ENCODE measurements at regions of chr2 and their contacts with region 1.

Region 1: GRCh38 chr2:136135921-136136906 is 18.3 kb upstream of the CXCR4 start:
- DNase-seq: peak; percentile 32 to 98 (median 95)
- ATAC-seq: peak; percentile 76
- H3K4me3 ChIP-seq: peak overlapping the region; percentile 15
- H3K4me3 Mint-ChIP-seq: peak overlapping the region; percentile 52 to 92 (median 81)
- H3K27ac ChIP-seq: peak overlapping the region; percentile 99
- H3K27ac Mint-ChIP-seq: peak overlapping the region; percentile 82 to 100 (median 99)
- H3K4me1 ChIP-seq: peaks cover 86 to 87% of the 10 kb centered on the region in 2 donors
- H3K4me1 Mint-ChIP-seq: peaks cover 70 to 100% (median 94%) of the 10 kb centered on the region in 7 donors
- H3K27me3 ChIP-seq: no peaks in the 10 kb centered on the region
- H3K27me3 Mint-ChIP-seq: peaks cover 0 to 50% (median 0%) of the 10 kb centered on the region in 5 donors

Region 2: DNA sequence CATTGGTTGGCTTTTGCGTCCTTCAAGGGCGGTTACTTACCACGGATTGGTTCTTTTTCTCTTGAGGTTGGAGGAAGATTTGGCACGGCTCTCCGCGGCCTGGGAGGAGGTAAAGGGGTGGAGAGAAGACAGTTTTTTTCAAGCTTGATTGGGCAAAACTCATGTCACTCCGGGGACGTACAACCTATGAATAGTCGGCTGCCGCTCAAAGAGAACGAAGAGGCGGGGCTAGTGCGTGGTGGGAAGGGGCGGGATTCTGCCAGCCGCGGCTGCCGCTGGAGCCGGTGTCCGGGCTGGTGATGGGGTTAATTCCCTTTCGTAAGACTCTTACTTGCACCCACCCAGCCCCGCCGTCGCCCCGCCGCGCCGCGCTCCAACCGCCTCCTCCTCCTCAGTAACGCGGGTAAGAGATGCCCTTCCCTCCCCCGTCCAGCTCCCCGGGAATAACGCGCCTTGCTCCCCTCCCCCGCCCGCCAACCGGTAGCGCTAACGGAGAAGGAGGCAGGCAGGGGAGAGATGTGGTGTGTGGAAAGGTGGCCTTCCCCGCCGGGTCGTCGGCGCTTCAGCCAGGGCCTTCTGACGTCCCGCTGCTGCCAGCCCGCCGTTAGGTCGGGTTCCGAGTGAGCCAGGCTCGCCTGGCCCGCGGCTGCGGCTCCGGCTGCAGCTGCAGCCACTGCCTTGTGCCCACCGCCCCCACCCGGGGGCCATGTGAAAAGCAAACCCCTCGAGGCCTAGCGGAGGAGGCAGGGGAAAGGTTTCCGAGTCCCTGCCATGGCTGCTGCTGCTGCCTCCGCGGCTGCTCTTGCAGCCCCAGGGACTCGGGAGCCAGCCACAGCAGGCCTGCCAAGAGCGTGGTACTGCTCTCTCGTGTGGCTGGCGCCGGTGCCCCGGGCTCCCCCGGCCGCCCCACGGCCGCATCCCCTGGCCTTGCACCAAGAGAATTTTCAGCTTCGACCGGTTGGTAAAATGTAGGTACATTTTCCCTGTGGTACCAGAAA is 604.7 kb before region 1 on chr2 and contains the start of gene R3HDM1:
- CTCF ChIA-PET with region 1: no interaction called
- POLR2A ChIA-PET with region 1: no interaction called
- intact Hi-C with region 1: loop called (anchors 2 to 5 kb)
- DNase-seq: peak in 8 of 9 donors; percentile 71 to 99 (median 98)
- ATAC-seq: peak; percentile 89
- H3K4me3 ChIP-seq: peak within 1 kb of the TSS; percentile 83
- H3K4me3 Mint-ChIP-seq: no peak within 1 kb of the TSS
- H3K27ac ChIP-seq: peak within 1 kb of the TSS; percentile 84
- H3K27ac Mint-ChIP-seq: peak within 1 kb of the TSS in 7 of 9 donors; percentile 36 to 81 (median 67)
- H3K4me1 ChIP-seq: peaks cover 4 to 21% of the 10 kb centered on the region in 2 donors
- H3K4me1 Mint-ChIP-seq: peaks cover 10 to 39% (median 34%) of the 10 kb centered on the region in 7 donors
- H3K27me3 ChIP-seq: no peaks in the 10 kb centered on the region
- H3K27me3 Mint-ChIP-seq: no peaks in the 10 kb centered on the region
- total RNA-seq, gene R3HDM1: 35.0 to 58.2 (median 47.0) TPM

Region 3: DNA sequence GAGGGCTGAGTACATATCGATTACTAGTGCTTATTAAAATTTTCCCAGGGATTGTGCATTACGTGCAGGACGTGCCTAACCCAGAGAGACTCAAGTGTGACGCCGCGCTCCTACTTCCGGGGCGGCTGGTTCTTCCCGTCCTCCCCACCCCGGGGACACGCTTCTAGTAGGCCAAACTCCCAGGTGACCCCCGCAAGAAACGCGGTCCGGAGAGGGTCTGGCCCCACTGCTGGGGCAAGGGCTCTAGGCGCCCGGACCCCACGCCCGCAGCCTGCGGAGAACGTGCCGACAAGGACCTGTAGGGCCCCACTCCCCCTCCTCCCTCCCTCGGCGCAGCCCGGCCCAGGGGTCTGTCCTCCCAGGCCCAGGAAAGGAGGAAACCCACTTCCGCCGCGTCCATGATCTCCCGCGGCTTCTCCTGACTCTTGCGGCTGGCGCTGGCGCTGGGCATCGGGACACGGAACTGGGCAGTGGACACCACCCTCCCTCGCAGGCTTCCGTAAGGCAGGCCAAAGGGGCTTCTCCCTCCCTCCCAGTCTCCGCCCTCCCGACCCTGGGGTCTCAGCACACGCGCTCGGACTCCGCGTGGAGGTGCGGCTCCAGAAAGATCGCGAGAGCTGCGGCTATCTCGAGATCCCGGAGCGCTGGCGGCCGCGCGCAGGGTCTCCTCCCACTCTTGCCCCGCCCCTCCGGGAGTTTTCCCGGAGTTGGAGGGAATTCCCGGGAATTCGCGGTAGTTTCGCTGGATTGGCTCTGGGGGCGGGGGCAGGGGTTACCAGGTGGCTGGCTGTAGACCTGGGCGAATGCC is 151.0 kb before region 1 on chr2 and contains the start of gene DARS1:
- CTCF ChIA-PET with region 1: interaction called, 3 read pairs
- POLR2A ChIA-PET with region 1: interaction called, 12 read pairs
- intact Hi-C with region 1: loop called (anchors 1 kb)
- DNase-seq: peak; percentile 67 to 89 (median 78)
- ATAC-seq: peak; percentile 92
- H3K4me3 ChIP-seq: peak within 1 kb of the TSS; percentile 82
- H3K4me3 Mint-ChIP-seq: peak within 1 kb of the TSS; percentile 90 to 99 (median 97)
- H3K27ac ChIP-seq: peak within 1 kb of the TSS; percentile 95
- H3K27ac Mint-ChIP-seq: peak within 1 kb of the TSS; percentile 98 to 99 (median 98)
- H3K4me1 ChIP-seq: peaks cover 0 to 24% of the 10 kb centered on the region in 2 donors
- H3K4me1 Mint-ChIP-seq: peaks cover 9 to 66% (median 54%) of the 10 kb centered on the region in 7 donors
- H3K27me3 ChIP-seq: no peaks in the 10 kb centered on the region
- H3K27me3 Mint-ChIP-seq: no peaks in the 10 kb centered on the region
- total RNA-seq, gene DARS1: 45.3 to 140 (median 63.4) TPM

Region 4: DNA sequence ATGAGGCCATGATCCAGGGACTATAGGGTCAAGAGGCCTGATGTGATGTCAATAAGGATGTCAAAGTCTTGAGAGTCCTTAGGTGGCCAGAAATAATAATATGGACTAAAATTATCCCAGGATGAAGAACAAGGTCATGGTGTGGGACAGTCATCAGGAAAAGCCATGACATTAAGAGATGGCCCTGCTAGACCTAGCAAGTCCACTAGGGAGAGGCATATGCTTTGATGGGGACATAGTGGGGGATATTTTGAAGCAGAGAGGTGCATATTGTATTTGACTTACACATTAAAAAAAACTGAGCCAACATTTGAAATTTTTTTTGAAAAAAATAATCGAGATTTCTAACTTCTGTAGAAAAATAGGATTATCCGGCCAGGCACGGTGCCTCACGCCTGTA is 35.0 kb after region 1 on chr2:
- CTCF ChIA-PET with region 1: no interaction called
- POLR2A ChIA-PET with region 1: interaction called, 15 read pairs
- intact Hi-C with region 1: loop called in 1 of 2 experiments (anchors 5 kb)
- DNase-seq: no peak
- ATAC-seq: no peak
- H3K4me3 ChIP-seq: no peak overlapping the region
- H3K4me3 Mint-ChIP-seq: peak overlapping the region in 2 of 10 donors; percentile 3 to 23
- H3K27ac ChIP-seq: no peak overlapping the region
- H3K27ac Mint-ChIP-seq: peak overlapping the region in 3 of 9 donors; percentile 17 to 70 (median 18)
- H3K4me1 ChIP-seq: peaks cover 0 to 9% of the 10 kb centered on the region in 2 donors
- H3K4me1 Mint-ChIP-seq: peaks cover 6 to 52% (median 30%) of the 10 kb centered on the region in 7 donors
- H3K27me3 ChIP-seq: no peaks in the 10 kb centered on the region
- H3K27me3 Mint-ChIP-seq: peaks cover 0 to 12% (median 0%) of the 10 kb centered on the region in 5 donors

Region 5: DNA sequence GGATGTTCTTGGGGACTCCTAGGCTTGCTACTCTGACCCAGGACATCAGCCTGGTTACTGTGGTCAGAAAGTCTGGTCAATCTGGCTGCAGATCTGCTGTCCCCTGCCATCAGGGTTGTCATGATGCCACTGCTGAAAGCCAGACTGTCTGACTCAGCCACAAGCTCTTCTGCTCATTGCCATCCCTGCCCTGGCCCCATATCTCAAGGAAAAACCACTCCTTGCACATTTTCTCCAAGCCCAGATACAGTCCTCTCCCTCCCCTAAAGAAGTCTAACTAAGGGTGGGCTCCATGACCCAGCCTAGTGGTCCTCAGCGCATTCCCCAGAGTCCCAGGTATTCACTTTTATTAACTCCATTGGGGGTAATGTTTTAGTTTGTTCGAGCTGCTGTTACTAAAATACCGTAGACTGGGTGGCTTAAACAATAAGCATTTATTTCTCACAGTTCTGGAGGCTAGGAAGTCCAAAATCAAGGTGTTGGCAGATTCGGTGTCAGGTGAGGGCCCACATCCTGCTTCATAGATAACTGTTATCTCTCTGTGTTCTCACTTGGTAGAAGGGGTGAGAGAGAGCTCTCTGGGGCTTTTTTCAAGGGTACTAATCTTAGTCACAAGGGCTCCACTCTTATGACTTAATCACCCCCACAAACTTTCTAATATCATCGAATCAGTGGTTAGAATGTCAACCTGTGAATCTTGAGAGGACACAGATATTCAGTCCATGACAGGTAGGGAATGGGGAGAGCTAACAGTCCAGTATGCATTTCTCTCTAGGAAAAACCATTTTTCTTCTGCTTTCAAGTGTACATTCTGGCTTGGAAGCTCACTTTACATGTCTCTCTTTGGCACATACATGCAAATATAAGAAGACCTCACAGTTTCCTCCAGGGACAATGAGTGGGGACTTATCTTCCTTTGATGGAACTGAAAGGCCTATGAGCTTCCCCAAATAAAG is 76.5 kb after region 1 on chr2:
- CTCF ChIA-PET with region 1: interaction called, 3 read pairs
- POLR2A ChIA-PET with region 1: interaction called, 14 read pairs
- intact Hi-C with region 1: loop called (anchors 1 to 5 kb)
- DNase-seq: peak in 6 of 9 donors; percentile 22 to 54 (median 43)
- ATAC-seq: peak; percentile 64
- H3K4me3 ChIP-seq: peak overlapping the region; percentile 3
- H3K4me3 Mint-ChIP-seq: peak overlapping the region in 8 of 10 donors; percentile 5 to 56 (median 48)
- H3K27ac ChIP-seq: peak overlapping the region; percentile 14
- H3K27ac Mint-ChIP-seq: peak overlapping the region; percentile 0 to 88 (median 83)
- H3K4me1 ChIP-seq: peaks cover 21 to 30% of the 10 kb centered on the region in 2 donors
- H3K4me1 Mint-ChIP-seq: peaks cover 22 to 52% (median 44%) of the 10 kb centered on the region in 7 donors
- H3K27me3 ChIP-seq: no peaks in the 10 kb centered on the region
- H3K27me3 Mint-ChIP-seq: peaks cover 0 to 5% (median 0%) of the 10 kb centered on the region in 5 donors

Region 6: GRCh38 chr2:136281281-136282114 is 145.3 kb after region 1 on chr2:
- CTCF ChIA-PET with region 1: interaction called, 3 read pairs
- POLR2A ChIA-PET with region 1: interaction called, 10 read pairs
- intact Hi-C with region 1: loop called in 1 of 2 experiments (anchors 5 kb)
- DNase-seq: peak; percentile 24 to 73 (median 53)
- ATAC-seq: peak; percentile 91
- H3K4me3 ChIP-seq: no peak overlapping the region
- H3K4me3 Mint-ChIP-seq: peak overlapping the region; percentile 16 to 79 (median 52)
- H3K27ac ChIP-seq: peak overlapping the region; percentile 58
- H3K27ac Mint-ChIP-seq: peak overlapping the region; percentile 86 to 98 (median 94)
- H3K4me1 ChIP-seq: peaks cover 26 to 33% of the 10 kb centered on the region in 2 donors
- H3K4me1 Mint-ChIP-seq: peaks cover 28 to 59% (median 50%) of the 10 kb centered on the region in 7 donors
- H3K27me3 ChIP-seq: no peaks in the 10 kb centered on the region
- H3K27me3 Mint-ChIP-seq: no peaks in the 10 kb centered on the region

Region 7: DNA sequence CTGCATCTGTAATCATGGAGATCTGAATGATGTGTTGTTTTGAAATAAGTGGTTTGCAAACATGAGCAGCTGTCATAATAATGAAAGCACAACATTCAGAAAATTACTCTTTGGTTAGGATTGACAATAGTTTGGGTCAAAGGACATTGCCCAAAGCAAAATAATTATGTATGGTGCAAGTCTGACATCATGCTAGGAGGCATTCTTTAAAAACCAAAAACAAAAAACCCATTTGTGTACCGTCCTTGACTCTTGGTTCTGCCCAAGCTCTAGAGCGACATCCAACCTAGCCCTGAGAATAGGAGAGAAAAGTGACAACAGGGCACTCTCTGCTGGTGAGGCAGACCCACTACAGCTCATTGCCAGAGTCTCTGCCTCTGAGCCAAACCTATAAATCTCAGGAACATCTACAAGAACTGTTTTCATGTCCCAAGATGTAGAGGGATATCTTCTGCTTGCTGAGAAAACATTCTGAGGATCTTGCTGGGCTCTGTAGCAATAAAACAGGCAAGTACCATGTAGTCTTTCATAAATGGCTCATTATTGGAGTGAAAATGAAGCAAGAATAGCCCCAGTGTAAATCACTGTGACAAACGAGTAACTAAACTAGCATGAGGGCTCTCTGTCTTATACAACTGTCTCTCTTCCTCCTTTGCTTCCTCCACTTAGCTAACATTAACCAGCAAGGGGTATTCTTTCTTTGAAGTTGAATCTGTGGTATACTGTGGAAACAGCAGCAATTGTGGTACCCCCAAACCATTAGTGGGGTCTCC is 248.5 kb after region 1 on chr2:
- CTCF ChIA-PET with region 1: interaction called, 14 read pairs
- POLR2A ChIA-PET with region 1: interaction called, 86 read pairs
- intact Hi-C with region 1: loop called (anchors 1 kb)
- DNase-seq: peak in 7 of 9 donors; percentile 63 to 79 (median 69)
- ATAC-seq: peak; percentile 78
- H3K4me3 ChIP-seq: no peak overlapping the region
- H3K4me3 Mint-ChIP-seq: peak overlapping the region in 6 of 10 donors; percentile 4 to 73 (median 30)
- H3K27ac ChIP-seq: no peak overlapping the region
- H3K27ac Mint-ChIP-seq: peak overlapping the region; percentile 37 to 98 (median 92)
- H3K4me1 ChIP-seq: peaks cover 22 to 25% of the 10 kb centered on the region in 2 donors
- H3K4me1 Mint-ChIP-seq: peaks cover 21 to 46% (median 40%) of the 10 kb centered on the region in 7 donors
- H3K27me3 ChIP-seq: no peaks in the 10 kb centered on the region
- H3K27me3 Mint-ChIP-seq: no peaks in the 10 kb centered on the region

Measured in naive thymus-derived CD4-positive, alpha-beta T cell (primary cell).